ENCODE measurements at regions of chr5 and their contacts with region 1.

Region 1: DNA sequence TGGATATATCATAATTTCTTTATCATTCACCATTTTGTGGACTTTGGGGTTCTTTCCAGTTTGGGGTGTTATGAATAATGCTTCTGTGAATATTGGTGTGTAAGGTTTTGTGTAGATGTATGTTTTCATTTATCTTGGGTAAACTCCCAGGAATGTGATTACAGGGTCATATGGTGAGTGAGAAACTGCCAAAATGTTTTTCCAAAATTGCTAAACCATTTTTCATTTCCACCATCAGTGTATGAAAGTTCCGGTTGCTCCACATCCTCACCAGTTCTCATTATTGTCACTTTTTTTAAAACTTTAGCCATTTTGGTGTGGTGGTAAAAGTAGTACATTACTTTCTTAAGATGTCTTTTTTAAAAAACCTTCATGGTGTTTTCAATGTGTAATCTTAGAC is 152.9 kb downstream of the NIPBL start:
- H3K4me3 Mint-ChIP-seq: no peak overlapping the region
- H3K27ac Mint-ChIP-seq: no peak overlapping the region
- H3K4me1 Mint-ChIP-seq: no peaks in the 10 kb centered on the region
- H3K27me3 Mint-ChIP-seq: no peaks in the 10 kb centered on the region

Region 2: GRCh38 chr5:37319037-37319782 is 289.8 kb after region 1 on chr5:
- intact Hi-C with region 1: loop called (anchors 10 kb)
- H3K4me3 Mint-ChIP-seq: no peak overlapping the region
- H3K27ac Mint-ChIP-seq: no peak overlapping the region
- H3K4me1 Mint-ChIP-seq: peaks cover 5% of the 10 kb centered on the region
- H3K27me3 Mint-ChIP-seq: no peaks in the 10 kb centered on the region